Motor neuron (in vitro differentiated cells): ENCODE measurements at regions of chr9 and their contacts with region 1.

Region 1: DNA sequence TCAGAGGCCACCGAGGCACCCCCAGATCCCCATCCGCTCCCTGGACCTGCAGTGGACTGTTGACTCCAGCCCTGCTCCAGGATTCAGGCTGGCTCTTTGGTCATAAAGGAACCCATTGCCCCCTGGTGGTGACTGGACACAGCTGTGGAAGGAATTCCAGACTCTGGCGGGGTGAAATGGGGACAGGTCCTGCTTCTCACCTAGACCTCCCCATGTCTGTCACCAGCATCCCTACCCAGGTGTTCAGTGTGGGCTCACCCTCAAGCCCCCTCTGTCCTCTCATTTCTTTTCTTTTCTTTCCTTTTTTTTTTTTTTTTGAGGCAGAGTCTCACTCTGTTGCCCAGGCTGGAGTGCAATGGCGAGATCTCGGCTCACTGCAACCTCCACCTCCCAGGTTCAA is 25.5 kb upstream of the STXBP1 start:
- ATAC-seq: peak; percentile 84 to 93 (median 88)
- H3K4me3 ChIP-seq: no peak overlapping the region
- H3K27ac ChIP-seq: no peak overlapping the region
- H3K4me1 ChIP-seq: no peaks in the 10 kb centered on the region

Region 2: GRCh38 chr9:127244609-127245601 is 341.6 kb before region 1 on chr9:
- in situ Hi-C with region 1: no loop called
- ATAC-seq: peak; percentile 100
- H3K4me3 ChIP-seq: peak overlapping the region; percentile 51 to 59 (median 57)
- H3K27ac ChIP-seq: no peak overlapping the region
- H3K4me1 ChIP-seq: peaks cover 3 to 9% of the 10 kb centered on the region in 2 donors

Region 3: DNA sequence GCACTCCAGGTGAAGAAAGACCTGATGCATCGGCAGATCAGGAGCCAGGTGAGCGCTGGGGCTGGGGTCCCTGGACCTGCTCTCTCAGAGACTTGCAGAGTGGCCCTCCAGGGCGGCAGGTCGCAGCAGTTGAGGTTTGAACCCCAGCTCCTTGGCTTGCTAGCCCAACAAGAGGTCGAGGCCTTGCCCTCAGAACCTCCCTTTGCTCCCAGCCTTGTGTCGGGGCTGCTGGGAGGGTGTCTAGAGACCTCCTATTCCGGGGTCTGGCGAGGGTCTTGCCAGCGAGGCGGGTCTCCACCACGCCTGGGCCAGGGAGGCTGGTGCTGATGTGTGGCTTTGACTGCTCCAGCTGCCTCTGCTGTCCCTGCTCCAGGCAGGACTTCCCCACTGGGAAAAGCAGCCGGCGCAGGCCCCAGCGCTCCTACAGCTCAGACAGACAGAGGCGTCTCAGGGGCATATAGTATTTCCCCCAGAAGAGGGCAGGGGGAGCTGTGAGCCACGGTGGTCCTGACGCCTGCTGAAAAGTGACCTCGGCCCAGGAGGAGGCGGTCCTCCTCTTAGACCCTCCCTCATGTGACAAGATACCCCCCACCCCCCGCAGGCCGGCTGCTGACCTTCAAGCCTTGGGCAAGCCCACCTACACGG is 96.9 kb before region 1 on chr9:
- in situ Hi-C with region 1: loop called in 1 of 9 experiments (anchors 25 kb)
- ATAC-seq: peak in 6 of 8 experiments; percentile 30 to 75 (median 68)
- H3K4me3 ChIP-seq: no peak overlapping the region
- H3K27ac ChIP-seq: no peak overlapping the region
- H3K4me1 ChIP-seq: peaks cover 9 to 10% of the 10 kb centered on the region in 2 donors

Region 4: GRCh38 chr9:127503947-127504782 is 82.4 kb before region 1 on chr9:
- in situ Hi-C with region 1: loop called in 3 of 9 experiments (anchors 10 to 25 kb)
- ATAC-seq: peak; percentile 63 to 89 (median 74)
- H3K4me3 ChIP-seq: no peak overlapping the region
- H3K27ac ChIP-seq: no peak overlapping the region
- H3K4me1 ChIP-seq: no peaks in the 10 kb centered on the region

Region 5: GRCh38 chr9:127715394-127716337 is 129.1 kb after region 1 on chr9 and contains the starts of genes PTRH1 and TTC16:
- in situ Hi-C with region 1: loop called in 1 of 9 experiments (anchors 10 kb)
- ATAC-seq: peak; percentile 87 to 95 (median 92)
- H3K4me3 ChIP-seq: peak within 1 kb of the TSS; percentile 53 to 86 (median 68)
- H3K27ac ChIP-seq: no peak within 1 kb of the TSS
- H3K4me1 ChIP-seq: peaks cover 19 to 23% of the 10 kb centered on the region in 2 donors
- total RNA-seq, gene PTRH1: 6.1 to 48.9 (median 11.5) TPM
- total RNA-seq, gene TTC16: 0.05 to 0.57 (median 0.28) TPM

Region 6: GRCh38 chr9:127734747-127735529 is 148.4 kb after region 1 on chr9 and contains the start of gene TOR2A:
- in situ Hi-C with region 1: loop called in 1 of 9 experiments (anchors 25 kb)
- ATAC-seq: peak; percentile 86 to 94 (median 90)
- H3K4me3 ChIP-seq: peak within 1 kb of the TSS; percentile 66 to 88 (median 76)
- H3K27ac ChIP-seq: peak within 1 kb of the TSS; percentile 88 to 89
- H3K4me1 ChIP-seq: peaks cover 14% of the 10 kb centered on the region in 2 donors
- total RNA-seq, gene TOR2A: 5.5 to 18.1 (median 11.8) TPM

Region 7: GRCh38 chr9:127916665-127917613 is 330.4 kb after region 1 on chr9 and contains the start of gene ST6GALNAC4:
- in situ Hi-C with region 1: loop called (anchors 25 kb)
- ATAC-seq: peak; percentile 69 to 92 (median 88)
- H3K4me3 ChIP-seq: peak within 1 kb of the TSS; percentile 45 to 57 (median 46)
- H3K27ac ChIP-seq: peak within 1 kb of the TSS in 1 of 2 donors; percentile 17
- H3K4me1 ChIP-seq: peaks cover 6 to 21% of the 10 kb centered on the region in 2 donors
- total RNA-seq, gene ST6GALNAC4: 6.5 to 54.7 (median 14.6) TPM